PC-9 (cell line): ENCODE measurements at regions of chr11 and their contacts with region 1.

Region 1: DNA sequence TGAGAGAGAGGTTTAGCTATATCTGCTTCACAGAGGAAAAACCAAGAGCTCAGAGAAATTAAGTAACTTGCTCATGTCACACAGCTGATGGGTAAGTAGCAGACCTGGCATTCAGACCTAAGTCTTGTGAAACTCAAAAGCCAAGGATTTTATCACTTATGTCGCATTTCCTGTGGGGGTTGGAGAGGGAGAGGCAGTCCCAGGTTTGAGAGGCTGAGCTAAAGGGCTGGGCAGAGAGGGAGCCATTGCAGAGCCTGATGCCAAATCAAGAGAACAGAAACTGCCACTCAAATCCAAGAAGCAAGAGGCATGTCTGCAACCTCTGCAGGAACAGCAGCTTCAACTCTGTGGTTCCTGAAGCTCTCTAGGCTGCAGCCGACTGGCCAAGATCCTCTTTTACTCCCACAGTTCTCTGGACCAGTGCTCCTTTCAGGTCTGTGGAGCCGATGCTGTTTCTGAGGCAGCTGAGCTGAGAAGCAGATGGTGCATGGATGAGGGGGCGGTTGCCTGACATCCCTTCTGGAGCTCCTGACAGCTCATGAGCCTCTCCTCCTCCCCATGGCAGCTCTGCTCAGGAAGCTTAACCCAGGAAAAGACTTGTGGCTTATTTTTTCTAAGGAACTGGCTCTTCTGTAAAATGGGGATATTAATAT is 47.6 kb upstream of the NAV2 start:
- DNase-seq: no peak
- H3K4me3 ChIP-seq: no peak overlapping the region
- H3K27ac ChIP-seq: no peak overlapping the region
- H3K4me1 ChIP-seq: peaks cover 35% of the 10 kb centered on the region
- H3K27me3 ChIP-seq: no peaks in the 10 kb centered on the region
- CTCF ChIP-seq: no peak

Region 2: GRCh38 chr11:19723572-19724342 is 58.7 kb after region 1 on chr11:
- CTCF ChIA-PET with region 1: no interaction called
- POLR2A ChIA-PET with region 1: no interaction called
- intact Hi-C with region 1: loop called (anchors 5 kb)
- DNase-seq: peak; percentile 78 to 94
- H3K4me3 ChIP-seq: no peak overlapping the region
- H3K27ac ChIP-seq: peak overlapping the region; percentile 82
- H3K4me1 ChIP-seq: peaks cover 77% of the 10 kb centered on the region
- H3K27me3 ChIP-seq: no peaks in the 10 kb centered on the region
- CTCF ChIP-seq: no peak